Right ventricle myocardium inferior (tissue), 1 donor: ENCODE measurements at regions of chr1 and their contacts with region 1.

Region 1: GRCh38 chr1:1777950-1778662 is at the start of gene NADK:
- DNase-seq: peak; percentile 87
- ATAC-seq: peak; percentile 62
- total RNA-seq, gene NADK: 26.9 TPM

Region 2: GRCh38 chr1:1387098-1388077 is 390.7 kb before region 1 on chr1:
- intact Hi-C with region 1: no loop called
- DNase-seq: peak; percentile 47
- ATAC-seq: no peak

Region 3: GRCh38 chr1:1906185-1907097 is 128.3 kb after region 1 on chr1:
- intact Hi-C with region 1: loop called (anchors 5 kb)
- DNase-seq: peak; percentile 93
- ATAC-seq: peak; percentile 71

Region 4: GRCh38 chr1:2055911-2056575 is 277.9 kb after region 1 on chr1:
- intact Hi-C with region 1: no loop called
- DNase-seq: peak; percentile 49
- ATAC-seq: no peak